Activated T-helper 2 cell treated with anti-CD3 and anti-CD28 coated beads, Interferon-gamma antibody, Interleukin-2, Interleukin-4, amounts not matched to agents 10 μg/mL and 5 μg/mL and 100 μg/mL, durations not matched to agents 14 hours and 24 hours and 36 hours (primary cell): ENCODE measurements at regions of chr10 and their contacts with region 1.

Region 1: GRCh38 chr10:48306265-48306869 is at the start of gene MAPK8:
- DNase-seq: peak; percentile 91
- H3K4me3 Mint-ChIP-seq: peak within 1 kb of the TSS; percentile 92
- H3K27ac Mint-ChIP-seq: peak within 1 kb of the TSS; percentile 85
- H3K4me1 Mint-ChIP-seq: peaks cover 37% of the 10 kb centered on the region
- H3K27me3 Mint-ChIP-seq: peaks cover 5% of the 10 kb centered on the region
- total RNA-seq, gene MAPK8: 82.8 and 94.1 TPM in 2 replicates

Region 2: DNA sequence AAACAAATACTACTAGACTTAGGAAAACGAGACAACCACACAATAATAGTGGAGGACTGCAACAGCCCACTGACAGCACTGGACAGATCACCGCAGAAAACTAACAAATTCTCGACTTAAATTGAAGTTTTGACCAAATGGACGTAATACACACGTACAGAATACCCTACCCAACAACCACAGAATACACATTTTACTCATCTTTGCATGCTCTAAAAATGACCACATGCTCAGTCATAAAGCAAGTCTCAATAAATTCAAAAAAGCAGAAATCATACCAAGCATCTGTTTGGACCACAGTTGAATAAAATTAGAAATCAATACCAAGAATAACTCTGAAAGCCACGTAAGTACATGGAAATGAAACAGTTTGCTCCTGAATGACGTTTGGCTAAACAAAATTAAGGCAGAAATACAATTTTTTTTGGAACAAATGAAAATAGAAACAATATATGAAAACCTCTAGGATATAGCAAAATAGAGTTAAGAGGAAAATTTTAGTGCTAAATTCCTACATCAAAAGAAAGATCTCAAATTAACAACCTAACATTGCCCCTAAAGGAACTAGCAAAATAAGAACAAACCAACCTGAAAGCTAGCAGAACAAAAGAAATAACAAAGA is 30.7 kb after region 1 on chr10:
- intact Hi-C with region 1: loop called (anchors 2 kb)
- DNase-seq: no peak
- H3K4me3 Mint-ChIP-seq: peak overlapping the region; percentile 26
- H3K27ac Mint-ChIP-seq: peak overlapping the region; percentile 74
- H3K4me1 Mint-ChIP-seq: peaks cover 55% of the 10 kb centered on the region
- H3K27me3 Mint-ChIP-seq: no peaks in the 10 kb centered on the region

Region 3: DNA sequence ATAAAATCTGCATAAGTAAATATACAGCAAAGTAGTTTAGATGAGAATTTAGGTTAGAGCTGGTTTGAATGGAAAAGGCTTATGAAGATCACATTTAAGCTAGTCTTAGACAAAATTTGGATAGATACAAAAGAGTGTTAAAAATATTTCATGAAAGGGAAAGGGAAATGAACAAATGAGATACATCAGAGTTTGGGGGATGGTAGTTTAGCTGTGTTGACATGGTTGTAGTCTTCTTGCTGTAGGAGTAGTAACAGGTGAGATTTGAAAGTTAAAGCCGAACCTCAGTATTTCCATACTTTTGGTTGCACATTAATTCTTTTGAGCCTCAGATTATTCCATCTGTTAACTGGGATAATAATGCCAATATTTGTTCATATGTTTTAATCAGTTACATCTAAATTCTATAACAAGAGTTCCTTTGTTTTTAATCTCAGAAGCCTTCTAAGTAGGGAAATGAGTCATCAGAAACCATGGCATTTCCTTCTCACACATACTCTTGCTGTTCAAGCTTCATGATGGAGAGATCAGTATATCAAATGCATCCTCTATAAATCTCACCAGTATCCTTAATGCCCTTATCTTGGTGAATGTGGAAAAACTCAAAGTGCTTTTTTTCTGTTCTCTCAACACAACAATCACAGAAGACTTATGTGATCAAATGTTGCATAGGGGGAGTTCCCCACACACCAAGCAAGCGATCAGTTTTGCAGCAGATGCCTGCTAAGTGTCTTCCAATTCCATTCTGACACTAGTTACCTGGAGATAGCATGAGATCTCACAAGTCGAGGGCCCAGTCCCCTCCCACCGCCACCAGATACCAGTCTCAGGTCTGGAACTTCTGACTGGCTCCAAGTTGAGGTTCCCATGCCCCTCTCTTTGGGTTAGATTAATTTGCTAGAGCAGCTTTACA is 84.8 kb after region 1 on chr10:
- intact Hi-C with region 1: loop called (anchors 5 kb)
- DNase-seq: no peak
- H3K4me3 Mint-ChIP-seq: no peak overlapping the region
- H3K27ac Mint-ChIP-seq: peak overlapping the region; percentile 4
- H3K4me1 Mint-ChIP-seq: peaks cover 50% of the 10 kb centered on the region
- H3K27me3 Mint-ChIP-seq: no peaks in the 10 kb centered on the region

Region 4: DNA sequence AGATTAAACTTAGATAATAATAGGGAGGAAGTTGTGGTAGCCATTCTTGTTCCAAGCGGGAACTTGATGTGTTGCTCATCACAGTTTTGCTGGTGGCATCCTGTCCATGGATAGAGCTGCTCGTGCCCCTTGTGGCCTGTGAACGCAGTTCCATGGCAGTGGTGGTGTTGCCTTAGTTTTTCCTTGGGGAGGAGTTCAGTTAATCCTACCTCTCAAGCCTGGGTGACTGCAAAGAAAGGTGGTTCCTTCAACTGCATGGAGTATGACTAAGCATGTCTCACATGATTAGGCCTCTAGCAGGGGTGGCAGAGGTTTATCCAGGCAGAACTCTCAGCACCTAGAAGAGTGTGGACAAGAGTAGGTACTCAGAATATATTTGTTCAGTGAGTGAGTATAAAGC is 99.8 kb after region 1 on chr10:
- intact Hi-C with region 1: no loop called
- DNase-seq: no peak
- H3K4me3 Mint-ChIP-seq: no peak overlapping the region
- H3K27ac Mint-ChIP-seq: no peak overlapping the region
- H3K4me1 Mint-ChIP-seq: no peaks in the 10 kb centered on the region
- H3K27me3 Mint-ChIP-seq: no peaks in the 10 kb centered on the region

Region 5: GRCh38 chr10:48792687-48793096 is 486.3 kb after region 1 on chr10:
- intact Hi-C with region 1: loop called (anchors 10 kb)
- DNase-seq: no peak
- H3K4me3 Mint-ChIP-seq: no peak overlapping the region
- H3K27ac Mint-ChIP-seq: no peak overlapping the region
- H3K4me1 Mint-ChIP-seq: no peaks in the 10 kb centered on the region
- H3K27me3 Mint-ChIP-seq: no peaks in the 10 kb centered on the region